BJ (cell line): ENCODE measurements at regions of chr3 and their contacts with region 1.

Region 1: GRCh38 chr3:169668957-169669681 is 5.6 kb upstream of the MECOM start:
- DNase-seq: no peak
- H3K4me3 ChIP-seq: no peak overlapping the region
- H3K27me3 ChIP-seq: peaks cover 42% of the 10 kb centered on the region
- CTCF ChIP-seq: peak; percentile 75

Region 2: GRCh38 chr3:168865022-168865551 is 804.0 kb before region 1 on chr3:
- CTCF ChIA-PET with region 1: interaction called, 20 read pairs
- POLR2A ChIA-PET with region 1: no interaction called
- DNase-seq: no peak
- H3K4me3 ChIP-seq: no peak overlapping the region
- H3K27me3 ChIP-seq: peaks cover 2% of the 10 kb centered on the region
- CTCF ChIP-seq: peak; percentile 80

Region 3: DNA sequence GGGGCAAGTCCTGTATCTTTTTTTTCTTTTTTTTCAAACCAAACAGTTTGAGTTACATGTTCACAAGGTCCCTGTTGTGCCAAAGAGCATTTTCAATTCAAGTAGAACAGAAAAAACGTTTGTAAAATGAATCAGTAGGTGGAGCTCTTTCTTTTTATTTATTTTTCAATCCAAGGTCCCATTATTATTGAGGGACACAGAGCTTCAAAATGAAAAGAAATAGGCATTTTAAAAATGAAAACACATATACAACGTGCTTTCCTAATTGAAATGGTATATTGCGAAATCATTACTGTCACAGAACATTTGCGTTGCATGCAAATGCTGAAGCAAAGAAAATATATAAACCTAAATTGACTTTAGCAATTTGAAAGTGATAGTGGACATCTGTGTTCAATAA is 716.6 kb before region 1 on chr3:
- CTCF ChIA-PET with region 1: interaction called, 13 read pairs
- POLR2A ChIA-PET with region 1: no interaction called
- DNase-seq: peak; percentile 9
- H3K4me3 ChIP-seq: no peak overlapping the region
- H3K27me3 ChIP-seq: no peaks in the 10 kb centered on the region; the same call in 1 of the 2 replicates
- CTCF ChIP-seq: peak; percentile 28

Region 4: GRCh38 chr3:169149349-169149890 is 519.7 kb before region 1 on chr3:
- CTCF ChIA-PET with region 1: interaction called, 25 read pairs
- POLR2A ChIA-PET with region 1: no interaction called
- DNase-seq: no peak
- H3K4me3 ChIP-seq: peak overlapping the region; percentile 28
- H3K27me3 ChIP-seq: 0 out of 2 replicates have a peak, but pooled peaks cover 1% of the 10 kb centered on the region
- CTCF ChIP-seq: peak; percentile 88

Region 5: GRCh38 chr3:169564883-169565282 is 104.2 kb before region 1 on chr3:
- CTCF ChIA-PET with region 1: no interaction called
- POLR2A ChIA-PET with region 1: no interaction called
- DNase-seq: no peak
- H3K4me3 ChIP-seq: no peak overlapping the region
- H3K27me3 ChIP-seq: no peaks in the 10 kb centered on the region
- CTCF ChIP-seq: 0 out of 2 replicates have a peak, but pooled peaks have one; percentile 2